Mammary epithelial cell (primary cell): ENCODE measurements at regions of chr9 and their contacts with region 1.

Region 1: GRCh38 chr9:133417541-133418461 is at the start of gene REXO4:
- DNase-seq: peak; percentile 87
- H3K4me3 ChIP-seq: peak within 1 kb of the TSS; percentile 80 to 95 (median 93)
- H3K27ac ChIP-seq: peak within 1 kb of the TSS; percentile 64
- H3K4me1 ChIP-seq: peaks cover 12% of the 10 kb centered on the region
- H3K27me3 ChIP-seq: no peaks in the 10 kb centered on the region
- CTCF ChIP-seq: no peak
- total RNA-seq, gene REXO4: 14.8 to 33.1 TPM

Region 2: GRCh38 chr9:133133681-133134418 is 284.0 kb before region 1 on chr9:
- CTCF ChIA-PET with region 1: no interaction called
- dilution Hi-C with region 1: no loop called
- in situ Hi-C with region 1: no loop called
- intact Hi-C with region 1: no loop called
- DNase-seq: peak; percentile 98
- H3K4me3 ChIP-seq: no peak overlapping the region
- H3K27ac ChIP-seq: peak overlapping the region; percentile 85
- H3K4me1 ChIP-seq: peaks cover 34% of the 10 kb centered on the region
- H3K27me3 ChIP-seq: no peaks in the 10 kb centered on the region
- CTCF ChIP-seq: no peak

Region 3: GRCh38 chr9:133347985-133348717 is 69.7 kb before region 1 on chr9 and contains the starts of genes MED22 and RPL7A:
- CTCF ChIA-PET with region 1: no interaction called
- dilution Hi-C with region 1: no loop called
- in situ Hi-C with region 1: no loop called
- intact Hi-C with region 1: loop called (anchors 5 kb)
- DNase-seq: peak; percentile 93
- H3K4me3 ChIP-seq: peak within 1 kb of the TSS; percentile 82 to 98 (median 87)
- H3K27ac ChIP-seq: peak within 1 kb of the TSS; percentile 89
- H3K4me1 ChIP-seq: peaks cover 17% of the 10 kb centered on the region
- H3K27me3 ChIP-seq: no peaks in the 10 kb centered on the region
- CTCF ChIP-seq: no peak
- total RNA-seq, gene MED22: 17.2 to 35.4 TPM
- total RNA-seq, gene RPL7A: 1,339 to 1,542 TPM

Region 4: DNA sequence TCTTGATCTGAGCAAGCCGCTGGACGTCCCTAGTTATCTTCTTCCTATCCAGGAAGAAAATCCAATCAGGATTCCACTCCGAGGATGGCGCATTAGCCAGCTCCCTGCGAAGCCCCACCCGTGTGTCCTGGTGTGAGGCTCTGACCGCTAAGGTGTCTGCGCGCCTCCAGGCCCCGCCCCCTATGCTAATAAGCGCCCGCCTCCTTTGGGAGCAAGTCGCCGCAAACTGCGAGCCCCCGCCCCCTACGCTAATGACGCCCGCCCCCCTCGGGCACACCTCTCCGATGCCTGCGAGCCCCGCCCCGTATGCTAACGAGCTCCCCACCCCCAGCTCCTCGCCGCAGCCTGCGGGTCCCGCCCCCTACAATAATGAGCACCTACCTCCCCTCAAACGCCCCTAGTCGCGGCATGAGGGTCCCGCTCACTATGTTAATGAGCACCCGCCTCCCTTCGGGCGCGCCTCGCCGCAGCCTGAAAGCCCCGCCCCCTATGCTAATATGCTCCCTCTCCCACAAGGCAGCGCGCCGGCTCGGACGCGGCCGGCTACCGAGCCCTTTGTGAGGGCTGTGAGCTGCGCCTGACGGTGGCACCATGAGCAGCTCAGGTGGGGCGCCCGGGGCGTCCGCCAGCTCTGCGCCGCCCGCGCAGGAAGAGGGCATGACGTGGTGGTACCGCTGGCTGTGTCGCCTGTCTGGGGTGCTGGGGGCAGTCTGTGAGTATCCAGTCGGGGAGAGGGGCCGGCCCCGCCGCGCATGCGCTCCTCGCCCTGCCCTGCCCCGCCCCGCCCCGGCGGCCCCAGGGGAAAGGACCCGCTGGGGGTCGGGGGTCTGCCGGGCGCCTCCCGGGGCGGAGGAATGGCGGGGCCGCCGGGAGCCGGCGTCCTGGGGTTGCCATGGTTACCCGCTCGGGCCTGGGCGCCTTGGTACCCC is 41.9 kb after region 1 on chr9 and contains the start of gene CACFD1:
- CTCF ChIA-PET with region 1: no interaction called
- dilution Hi-C with region 1: loop called (anchors 5 kb)
- in situ Hi-C with region 1: no loop called
- intact Hi-C with region 1: loop called (anchors 2 kb)
- DNase-seq: peak; percentile 91
- H3K4me3 ChIP-seq: peak within 1 kb of the TSS; percentile 66 to 86 (median 66)
- H3K27ac ChIP-seq: peak within 1 kb of the TSS; percentile 55
- H3K4me1 ChIP-seq: peaks cover 10% of the 10 kb centered on the region
- H3K27me3 ChIP-seq: no peaks in the 10 kb centered on the region
- CTCF ChIP-seq: no peak
- total RNA-seq, gene CACFD1: 4.4 to 6.8 TPM

Region 5: DNA sequence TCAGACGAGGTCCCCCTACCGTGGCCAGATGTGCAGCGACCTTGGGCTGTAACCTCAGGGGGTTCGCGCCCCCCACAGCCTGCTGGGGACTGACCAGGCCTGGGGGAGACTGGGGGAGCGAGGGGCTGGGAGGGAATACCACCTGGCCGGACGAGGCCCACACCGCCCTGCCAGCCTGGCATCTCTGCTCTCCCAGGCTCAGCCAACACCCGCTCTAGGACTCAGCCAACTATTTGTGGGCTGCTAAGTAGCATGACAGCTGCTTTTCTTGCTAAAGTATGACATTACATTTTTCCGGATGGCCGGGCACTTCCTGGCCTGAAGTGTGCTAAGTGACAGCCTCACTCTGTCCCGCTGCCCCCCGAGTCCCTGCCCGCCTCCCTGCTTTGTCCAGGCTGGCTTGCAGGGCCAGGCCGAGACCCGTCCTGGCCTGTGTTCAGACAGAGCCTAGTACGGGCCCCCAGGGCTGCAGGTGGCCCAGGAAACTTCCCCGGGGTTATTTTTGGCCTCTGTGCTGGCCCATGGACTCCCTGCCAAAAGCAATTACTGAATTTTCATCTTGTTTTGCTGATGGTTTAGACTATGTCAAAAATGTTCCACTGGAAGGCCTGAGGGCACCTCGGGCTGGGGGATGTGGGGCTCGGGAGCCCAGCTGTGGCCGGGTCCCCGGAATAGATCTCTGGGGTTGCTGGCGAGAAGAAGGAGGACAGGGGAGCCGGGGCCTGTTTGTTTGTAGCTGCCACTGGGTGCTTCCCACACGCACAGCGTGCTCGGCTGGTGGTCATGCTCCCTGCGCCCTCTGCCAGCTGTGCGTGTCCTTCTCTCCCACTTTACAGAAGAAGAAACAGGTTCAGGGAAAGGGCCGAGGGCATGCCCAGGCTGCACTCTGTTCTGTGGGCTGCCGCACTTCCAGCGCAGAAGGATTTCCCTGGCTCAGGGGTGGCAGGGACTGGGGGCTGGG is 74.5 kb after region 1 on chr9:
- CTCF ChIA-PET with region 1: no interaction called
- dilution Hi-C with region 1: no loop called
- in situ Hi-C with region 1: no loop called
- intact Hi-C with region 1: no loop called
- DNase-seq: peak; percentile 14
- H3K4me3 ChIP-seq: no peak overlapping the region
- H3K27ac ChIP-seq: no peak overlapping the region
- H3K4me1 ChIP-seq: peaks cover 13% of the 10 kb centered on the region
- H3K27me3 ChIP-seq: no peaks in the 10 kb centered on the region
- CTCF ChIP-seq: no peak

Region 6: DNA sequence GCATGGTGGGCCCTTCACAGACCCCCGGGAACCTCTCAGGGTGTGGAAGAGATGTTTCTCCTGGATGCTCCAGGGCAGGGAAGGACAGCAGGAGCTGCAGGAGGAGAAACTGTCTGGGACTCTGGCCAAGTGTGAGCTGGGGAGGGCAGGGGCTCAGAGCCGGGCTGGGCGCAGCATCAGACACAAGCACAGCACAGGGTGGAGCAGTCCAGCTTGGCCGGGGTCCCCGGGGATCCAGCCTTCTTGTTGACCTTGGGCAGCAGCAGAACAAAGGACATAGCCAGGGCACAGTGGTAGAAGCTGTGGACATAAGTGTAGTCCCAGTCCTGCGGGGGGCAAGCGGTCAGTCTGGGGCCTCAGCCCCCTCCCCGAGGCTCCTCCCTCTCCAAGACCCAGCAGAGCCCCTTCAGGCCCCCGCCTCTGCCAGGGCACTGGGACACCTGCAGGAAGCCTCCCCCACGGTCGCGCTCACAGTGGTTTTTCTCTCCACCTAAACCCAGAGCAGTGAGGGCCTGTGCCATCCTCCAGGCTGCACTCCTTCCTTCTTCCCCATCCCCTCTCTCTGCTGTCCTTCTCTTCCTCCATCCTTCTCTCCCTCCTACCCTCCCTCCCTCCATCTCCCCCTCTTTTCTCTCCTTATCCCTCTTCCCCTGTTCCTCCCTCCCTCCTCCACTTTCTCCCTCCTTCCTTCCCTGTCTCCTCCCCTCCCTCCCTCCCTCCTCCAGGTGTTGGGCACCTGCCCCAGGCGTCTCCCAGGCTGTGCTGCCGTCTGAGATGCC is 96.8 kb after region 1 on chr9:
- CTCF ChIA-PET with region 1: no interaction called
- dilution Hi-C with region 1: loop called (anchors 5 kb)
- in situ Hi-C with region 1: no loop called
- intact Hi-C with region 1: no loop called
- DNase-seq: no peak
- H3K4me3 ChIP-seq: no peak overlapping the region
- H3K27ac ChIP-seq: no peak overlapping the region
- H3K4me1 ChIP-seq: peaks cover 4% of the 10 kb centered on the region
- H3K27me3 ChIP-seq: peaks cover 2% of the 10 kb centered on the region
- CTCF ChIP-seq: no peak

Region 7: DNA sequence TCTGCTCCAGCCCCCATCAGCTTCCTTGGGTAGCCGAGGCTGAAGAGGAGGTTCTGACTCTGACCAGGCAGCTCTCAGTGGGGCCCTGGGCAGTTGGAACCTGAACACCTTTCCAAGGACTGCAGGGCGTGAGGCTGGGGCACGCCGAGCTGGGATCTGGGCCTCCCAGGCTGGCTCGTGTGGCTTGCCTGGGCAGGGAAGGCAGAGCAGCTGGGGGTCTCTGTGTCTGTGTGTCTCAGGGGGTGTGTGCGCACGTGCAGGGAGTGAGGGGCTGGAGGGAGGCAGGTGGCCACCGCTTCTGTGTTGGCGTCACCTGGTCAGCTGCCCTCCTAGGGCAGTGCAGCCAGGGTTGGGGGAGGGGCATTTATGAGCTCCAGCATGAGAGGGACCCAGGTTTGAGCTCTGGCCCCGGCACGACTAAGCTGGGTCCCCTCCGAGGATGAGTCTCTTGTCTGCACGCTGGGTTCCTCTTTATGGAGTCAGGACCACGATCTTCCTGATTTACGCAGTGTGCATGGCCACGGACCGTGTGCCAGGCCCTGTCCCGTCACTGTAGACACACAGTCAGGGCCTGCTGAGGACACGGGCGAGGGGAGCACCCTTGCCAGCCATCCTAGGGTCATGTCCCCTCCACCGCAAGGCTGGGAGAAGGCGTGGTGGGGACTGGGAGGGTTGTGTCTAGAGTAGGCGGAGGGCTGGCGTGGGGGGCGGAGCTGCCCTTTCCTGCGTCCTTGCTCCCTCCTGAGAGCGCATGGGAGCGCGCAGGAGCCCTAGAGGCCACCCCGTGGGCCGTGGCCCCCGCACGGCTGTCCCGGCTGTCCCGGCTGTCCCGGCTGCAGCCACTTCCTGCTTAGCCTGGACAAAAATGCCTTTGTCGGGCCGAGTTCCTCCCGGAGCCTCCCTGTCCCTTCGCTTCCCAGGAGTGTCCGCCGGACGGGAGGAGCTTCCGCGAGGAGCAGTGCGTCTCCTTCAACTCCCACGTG is 121.3 kb after region 1 on chr9:
- CTCF ChIA-PET with region 1: no interaction called
- dilution Hi-C with region 1: no loop called
- in situ Hi-C with region 1: no loop called
- intact Hi-C with region 1: no loop called
- DNase-seq: no peak
- H3K4me3 ChIP-seq: no peak overlapping the region
- H3K27ac ChIP-seq: no peak overlapping the region
- H3K4me1 ChIP-seq: peaks cover 20% of the 10 kb centered on the region
- H3K27me3 ChIP-seq: no peaks in the 10 kb centered on the region
- CTCF ChIP-seq: no peak

Region 8: DNA sequence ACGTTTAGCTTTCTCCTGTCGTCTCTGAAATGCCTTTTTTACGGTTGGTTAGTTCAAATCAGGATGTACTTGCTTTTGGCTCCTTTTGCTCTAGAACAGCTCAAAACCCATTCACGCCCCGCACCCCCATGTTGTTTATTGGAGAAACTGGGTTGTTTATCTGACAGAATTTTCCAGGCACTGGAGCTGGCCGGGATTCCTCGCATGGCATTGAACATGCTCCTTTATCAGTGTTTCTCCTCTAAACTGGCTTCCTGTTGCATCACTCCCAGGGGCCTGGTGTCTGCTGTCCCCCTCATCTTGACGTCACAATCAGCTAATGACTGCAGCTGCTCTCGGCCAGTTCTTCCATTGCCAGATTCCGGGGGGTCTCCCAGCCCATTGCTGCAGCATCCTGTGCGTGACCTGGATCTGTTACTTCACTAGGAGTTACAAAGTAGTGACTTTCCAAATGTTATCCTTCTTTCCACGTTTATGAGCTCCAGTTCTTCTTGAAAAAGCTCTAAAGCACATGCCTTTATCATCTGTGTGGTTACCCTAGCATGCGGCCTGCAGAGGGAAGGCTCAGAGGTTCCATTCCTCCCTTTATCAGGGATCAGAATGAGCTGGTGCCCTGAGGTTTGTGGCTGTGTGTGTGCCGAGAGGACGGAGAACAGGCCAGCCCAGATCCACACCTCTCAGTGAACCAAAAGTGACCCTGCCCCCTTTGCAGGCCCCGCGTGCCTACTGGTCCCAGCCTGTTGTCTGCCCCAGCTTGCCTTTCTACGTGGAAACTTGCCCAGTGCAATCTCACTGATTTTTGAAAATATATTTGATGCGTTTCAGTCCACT is 163.9 kb after region 1 on chr9:
- CTCF ChIA-PET with region 1: no interaction called
- dilution Hi-C with region 1: no loop called
- in situ Hi-C with region 1: no loop called
- intact Hi-C with region 1: no loop called
- DNase-seq: peak; percentile 15
- H3K4me3 ChIP-seq: no peak overlapping the region
- H3K27ac ChIP-seq: no peak overlapping the region
- H3K4me1 ChIP-seq: no peaks in the 10 kb centered on the region
- H3K27me3 ChIP-seq: peaks cover 7% of the 10 kb centered on the region
- CTCF ChIP-seq: no peak